MCF 10A (cell line): ENCODE measurements at regions of chr18 and their contacts with region 1.

Region 1: GRCh38 chr18:62131301-62131909 is 55.5 kb downstream of the PIGN start:
- DNase-seq: peak; percentile 75
- H3K4me3 Mint-ChIP-seq: no peak overlapping the region
- H3K27ac Mint-ChIP-seq: no peak overlapping the region
- H3K4me1 Mint-ChIP-seq: peaks cover 19% of the 10 kb centered on the region
- H3K27me3 Mint-ChIP-seq: no peaks in the 10 kb centered on the region
- CTCF ChIP-seq: peak; percentile 85

Region 2: DNA sequence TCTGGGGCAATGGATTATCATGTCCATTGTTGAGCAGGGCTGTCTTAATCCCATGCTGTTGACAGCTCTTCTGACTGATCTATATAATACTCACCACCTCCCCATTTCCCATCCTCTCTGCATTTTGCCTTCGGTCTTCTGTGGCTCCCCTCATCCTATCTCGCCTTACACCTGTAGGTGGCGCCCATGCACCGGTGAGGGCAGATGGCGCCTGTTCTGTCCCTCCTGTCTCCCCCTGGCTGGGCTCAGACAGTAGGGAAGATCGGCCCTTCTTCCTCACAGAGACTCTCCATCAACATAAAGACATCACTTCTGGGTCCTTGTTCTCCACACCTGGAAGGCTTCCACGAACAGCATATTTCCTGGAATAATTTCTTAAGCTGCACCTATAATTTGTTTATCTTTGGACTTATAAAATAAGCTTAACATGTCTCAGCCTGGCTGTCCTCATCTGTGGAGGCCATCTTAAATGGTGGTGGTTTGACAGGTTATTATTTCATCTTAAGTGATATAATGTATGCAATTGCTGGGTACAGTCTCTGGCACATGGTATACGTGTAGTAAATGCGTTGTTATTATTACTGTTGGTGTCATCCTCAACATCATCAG is 809.0 kb before region 1 on chr18:
- CTCF ChIA-PET with region 1: interaction called, 3 read pairs
- POLR2A ChIA-PET with region 1: no interaction called
- intact Hi-C with region 1: loop called (anchors 1 kb)
- DNase-seq: peak; percentile 69
- H3K4me3 Mint-ChIP-seq: no peak overlapping the region
- H3K27ac Mint-ChIP-seq: no peak overlapping the region
- H3K4me1 Mint-ChIP-seq: no peaks in the 10 kb centered on the region
- H3K27me3 Mint-ChIP-seq: peaks cover 15% of the 10 kb centered on the region
- CTCF ChIP-seq: peak; percentile 89

Region 3: GRCh38 chr18:61551586-61551985 is 579.8 kb before region 1 on chr18:
- CTCF ChIA-PET with region 1: interaction called, 22 read pairs
- POLR2A ChIA-PET with region 1: interaction called, 4 read pairs
- intact Hi-C with region 1: loop called (anchors 1 kb)
- DNase-seq: peak; percentile 78
- H3K4me3 Mint-ChIP-seq: no peak overlapping the region
- H3K27ac Mint-ChIP-seq: no peak overlapping the region
- H3K4me1 Mint-ChIP-seq: no peaks in the 10 kb centered on the region
- H3K27me3 Mint-ChIP-seq: no peaks in the 10 kb centered on the region
- CTCF ChIP-seq: peak; percentile 81

Region 4: GRCh38 chr18:61635901-61636528 is 495.4 kb before region 1 on chr18:
- CTCF ChIA-PET with region 1: interaction called, 8 read pairs
- POLR2A ChIA-PET with region 1: no interaction called
- intact Hi-C with region 1: loop called (anchors 1 kb)
- DNase-seq: peak; percentile 61
- H3K4me3 Mint-ChIP-seq: peak overlapping the region; percentile 1
- H3K27ac Mint-ChIP-seq: peak overlapping the region; percentile 2
- H3K4me1 Mint-ChIP-seq: peaks cover 7% of the 10 kb centered on the region
- H3K27me3 Mint-ChIP-seq: no peaks in the 10 kb centered on the region
- CTCF ChIP-seq: peak; percentile 66

Region 5: GRCh38 chr18:61901323-61901986 is 229.9 kb before region 1 on chr18:
- CTCF ChIA-PET with region 1: interaction called, 7 read pairs
- POLR2A ChIA-PET with region 1: interaction called, 3 read pairs
- intact Hi-C with region 1: loop called (anchors 1 kb)
- DNase-seq: peak; percentile 71
- H3K4me3 Mint-ChIP-seq: no peak overlapping the region
- H3K27ac Mint-ChIP-seq: no peak overlapping the region
- H3K4me1 Mint-ChIP-seq: peaks cover 17% of the 10 kb centered on the region
- H3K27me3 Mint-ChIP-seq: no peaks in the 10 kb centered on the region
- CTCF ChIP-seq: peak; percentile 93

Region 6: GRCh38 chr18:62026586-62026985 is 104.8 kb before region 1 on chr18:
- CTCF ChIA-PET with region 1: no interaction called
- POLR2A ChIA-PET with region 1: no interaction called
- intact Hi-C with region 1: no loop called
- DNase-seq: peak; percentile 40
- H3K4me3 Mint-ChIP-seq: no peak overlapping the region
- H3K27ac Mint-ChIP-seq: no peak overlapping the region
- H3K4me1 Mint-ChIP-seq: peaks cover 4% of the 10 kb centered on the region
- H3K27me3 Mint-ChIP-seq: no peaks in the 10 kb centered on the region
- CTCF ChIP-seq: no peak